GM12878 (cell line): ENCODE measurements at regions of chr4 and their contacts with region 1.

Region 1: GRCh38 chr4:3369781-3370674 is 71.7 kb upstream of the HGFAC start:
- DNase-seq: no peak
- ATAC-seq: peak; percentile 9; the same call in 2 of the 3 replicates
- H3K4me3 ChIP-seq: peak overlapping the region; percentile 2; the same call in 1 of the 2 replicates
- H3K27ac ChIP-seq: no peak overlapping the region
- H3K4me1 ChIP-seq: peaks cover 21% of the 10 kb centered on the region
- H3K27me3 ChIP-seq: peaks cover 0 to 2% of the 10 kb centered on the region in 2 experiments; a peak in 1 of 4 replicates
- CTCF ChIP-seq: no peak
- EP300 ChIP-seq: no peak
- POLR2A ChIP-seq: no peak
- RAD21 ChIP-seq: no peak

Region 2: GRCh38 chr4:3193531-3194203 is 176.4 kb before region 1 on chr4:
- CTCF ChIA-PET with region 1: no interaction called
- POLR2A ChIA-PET with region 1: no interaction called
- RAD21 ChIA-PET with region 1: no interaction called
- SMC1A ChIA-PET with region 1: no interaction called
- in situ Hi-C with region 1: no loop called
- intact Hi-C with region 1: no loop called
- DNase-seq: no peak
- ATAC-seq: no peak
- H3K4me3 ChIP-seq: no peak overlapping the region
- H3K27ac ChIP-seq: no peak overlapping the region
- H3K4me1 ChIP-seq: no peaks in the 10 kb centered on the region
- H3K27me3 ChIP-seq: no peaks in the 10 kb centered on the region
- CTCF ChIP-seq: peak in 1 of 3 experiments; percentile 12; a peak in 1 of 6 replicates
- EP300 ChIP-seq: no peak
- POLR2A ChIP-seq: no peak
- RAD21 ChIP-seq: no peak

Region 3: GRCh38 chr4:3355266-3355748 is 14.7 kb before region 1 on chr4:
- CTCF ChIA-PET with region 1: interaction called, 6 read pairs
- POLR2A ChIA-PET with region 1: interaction called, 4 read pairs
- RAD21 ChIA-PET with region 1: interaction called, 3 read pairs
- SMC1A ChIA-PET with region 1: interaction called, 10 read pairs
- in situ Hi-C with region 1: no loop called
- intact Hi-C with region 1: no loop called
- DNase-seq: peak; percentile 80
- ATAC-seq: peak; percentile 99
- H3K4me3 ChIP-seq: no peak overlapping the region
- H3K27ac ChIP-seq: peak overlapping the region; percentile 72
- H3K4me1 ChIP-seq: peaks cover 8% of the 10 kb centered on the region; the same call in 1 of the 2 replicates
- H3K27me3 ChIP-seq: no peaks in the 10 kb centered on the region
- CTCF ChIP-seq: no peak
- EP300 ChIP-seq: peak in 1 of 2 experiments; percentile 29; a peak in 2 of 4 replicates
- POLR2A ChIP-seq: no peak
- RAD21 ChIP-seq: no peak

Region 4: GRCh38 chr4:3388471-3389232 is 18.6 kb after region 1 on chr4:
- CTCF ChIA-PET with region 1: interaction called, 4 read pairs
- POLR2A ChIA-PET with region 1: no interaction called
- RAD21 ChIA-PET with region 1: no interaction called
- SMC1A ChIA-PET with region 1: interaction called, 14 read pairs
- in situ Hi-C with region 1: no loop called
- intact Hi-C with region 1: loop called (anchors 2 kb)
- DNase-seq: peak; percentile 77
- ATAC-seq: peak; percentile 88
- H3K4me3 ChIP-seq: peak overlapping the region; percentile 77
- H3K27ac ChIP-seq: peak overlapping the region; percentile 91
- H3K4me1 ChIP-seq: peaks cover 21% of the 10 kb centered on the region
- H3K27me3 ChIP-seq: no peaks in the 10 kb centered on the region
- CTCF ChIP-seq: no peak
- EP300 ChIP-seq: peak in 1 of 2 experiments; percentile 59; a peak in 2 of 4 replicates
- POLR2A ChIP-seq: no peak
- RAD21 ChIP-seq: no peak